ENCODE measurements at regions of chr10 and their contacts with region 1.

Region 1: DNA sequence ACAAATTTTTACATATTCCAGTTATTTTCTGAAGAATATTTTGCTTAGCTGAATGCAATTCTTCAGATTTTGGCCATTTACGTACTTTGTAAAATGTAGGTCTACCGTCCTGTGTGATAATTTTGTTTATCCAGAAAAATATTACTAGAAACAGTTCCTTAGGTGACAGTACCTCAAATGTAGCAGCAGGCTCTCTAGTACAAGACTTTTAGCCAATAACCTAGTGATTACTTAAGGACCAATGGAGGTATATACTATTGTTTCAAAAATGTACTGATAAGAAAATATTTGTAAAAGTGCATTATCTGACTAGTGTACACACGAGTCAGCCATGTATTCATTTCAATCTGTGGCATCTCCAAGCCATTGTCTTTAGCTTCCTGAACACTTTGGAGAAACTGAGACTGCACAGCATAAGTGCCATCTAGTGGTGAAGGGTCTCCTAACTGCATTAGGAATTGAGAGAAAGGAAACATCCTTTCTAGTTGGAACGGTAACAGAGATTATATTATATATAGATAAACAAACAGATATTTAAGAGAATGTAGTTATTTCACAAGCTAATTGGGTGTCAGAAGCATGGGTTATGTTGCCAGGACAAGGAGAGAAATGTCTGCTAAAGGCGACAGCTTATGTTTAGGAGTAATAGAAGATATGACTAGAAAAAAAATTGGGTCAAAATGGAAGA is 23.7 kb downstream of the RTKN2 start:
- DNase-seq: peak; percentile 39
- H3K4me3 Mint-ChIP-seq: no peak overlapping the region
- H3K27ac Mint-ChIP-seq: peak overlapping the region; percentile 63
- H3K4me1 Mint-ChIP-seq: peaks cover 32% of the 10 kb centered on the region
- H3K27me3 Mint-ChIP-seq: no peaks in the 10 kb centered on the region

Region 2: GRCh38 chr10:61628875-61629513 is 615.9 kb before region 1 on chr10:
- intact Hi-C with region 1: no loop called
- DNase-seq: no peak
- H3K4me3 Mint-ChIP-seq: no peak overlapping the region
- H3K27ac Mint-ChIP-seq: no peak overlapping the region
- H3K4me1 Mint-ChIP-seq: no peaks in the 10 kb centered on the region
- H3K27me3 Mint-ChIP-seq: no peaks in the 10 kb centered on the region

Region 3: DNA sequence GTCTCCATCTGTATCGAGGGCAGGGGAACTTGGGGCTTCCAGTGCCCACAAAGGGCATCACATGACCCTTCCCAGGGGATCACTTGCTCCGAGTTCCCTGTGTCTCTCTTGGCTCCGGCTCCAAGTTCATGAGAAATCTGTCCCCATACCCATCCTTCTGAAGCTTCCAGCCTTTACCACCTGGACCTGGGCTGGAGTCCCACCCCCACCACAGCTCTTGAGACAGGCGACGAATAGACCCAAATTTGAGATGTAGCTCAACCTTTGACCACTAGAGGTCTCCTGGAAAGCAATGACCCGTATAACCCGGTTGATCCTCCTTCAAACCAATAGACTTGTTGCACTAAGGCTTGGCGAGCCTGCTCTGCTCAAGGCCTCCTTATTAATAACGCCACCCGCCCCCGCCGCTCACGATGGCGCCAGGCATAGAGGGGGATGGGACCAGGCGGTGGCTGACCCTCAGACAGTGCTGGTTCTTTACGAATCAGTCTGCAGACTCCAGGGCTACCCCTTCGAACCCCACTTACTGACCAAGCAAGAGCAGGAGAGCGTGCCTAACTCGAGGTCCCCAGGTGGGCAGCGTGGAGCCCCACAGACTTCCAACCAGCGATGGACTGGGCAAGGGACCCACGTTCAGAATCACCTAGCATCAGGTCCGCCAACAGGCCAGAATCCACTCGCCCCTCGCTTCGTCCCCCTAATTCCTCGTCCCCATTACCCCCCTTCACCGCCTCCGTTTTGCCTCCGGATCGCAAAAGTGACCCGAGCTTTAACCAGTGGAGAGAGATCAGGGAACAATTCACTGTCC is 347.9 kb before region 1 on chr10:
- intact Hi-C with region 1: loop called (anchors 1 kb)
- DNase-seq: peak; percentile 56
- H3K4me3 Mint-ChIP-seq: peak overlapping the region; percentile 73
- H3K27ac Mint-ChIP-seq: peak overlapping the region; percentile 83
- H3K4me1 Mint-ChIP-seq: peaks cover 42% of the 10 kb centered on the region
- H3K27me3 Mint-ChIP-seq: no peaks in the 10 kb centered on the region

Region 4: DNA sequence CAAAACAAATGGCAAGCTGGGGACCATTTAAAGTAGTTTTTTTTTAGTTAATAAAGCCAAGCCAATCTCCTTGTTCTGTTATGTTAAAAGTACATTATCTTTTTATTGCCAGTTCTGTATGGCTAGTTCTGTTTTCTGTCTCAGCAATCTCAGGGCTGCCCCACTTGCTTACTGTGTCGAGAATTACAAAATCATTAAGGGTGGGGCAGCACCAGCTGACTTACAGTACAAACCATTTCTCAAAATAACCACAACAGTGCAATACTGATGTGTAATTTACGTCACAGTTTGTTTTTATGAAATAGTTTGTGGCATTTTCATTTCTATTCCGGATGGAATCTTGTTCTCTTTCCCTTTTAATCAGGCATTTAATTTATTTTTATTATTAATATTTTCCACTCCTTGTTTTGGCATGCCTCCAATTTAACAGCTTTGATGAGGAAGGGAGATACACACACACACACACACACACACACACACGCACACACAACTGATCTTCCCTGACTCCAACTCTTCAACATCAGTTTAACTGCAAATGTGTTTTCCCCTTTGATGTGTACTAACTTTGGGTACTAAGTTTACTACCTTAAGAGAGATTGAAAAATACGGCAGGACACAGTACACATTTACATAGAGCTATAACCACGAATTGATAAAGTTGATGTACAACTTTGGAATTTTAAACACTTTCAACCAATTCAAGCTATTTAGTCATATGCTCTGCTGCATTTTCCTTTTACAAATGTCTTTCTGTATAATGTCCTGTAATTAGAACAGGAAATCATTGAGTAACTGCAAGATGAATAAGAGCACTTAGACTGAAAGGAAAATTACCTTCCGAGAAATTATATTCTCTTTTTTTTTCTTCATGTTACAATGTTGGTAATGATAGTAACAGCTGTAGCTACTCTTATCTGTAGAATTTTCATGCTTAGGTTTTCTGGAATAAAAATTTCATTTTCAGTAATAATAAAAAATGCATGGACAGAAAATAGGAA is 252.0 kb before region 1 on chr10:
- intact Hi-C with region 1: loop called (anchors 1 kb)
- DNase-seq: peak; percentile 49
- H3K4me3 Mint-ChIP-seq: peak overlapping the region; percentile 73
- H3K27ac Mint-ChIP-seq: peak overlapping the region; percentile 88
- H3K4me1 Mint-ChIP-seq: peaks cover 68% of the 10 kb centered on the region
- H3K27me3 Mint-ChIP-seq: no peaks in the 10 kb centered on the region

Region 5: GRCh38 chr10:62063795-62064472 is 181.0 kb before region 1 on chr10:
- intact Hi-C with region 1: loop called (anchors 1 kb)
- DNase-seq: no peak
- H3K4me3 Mint-ChIP-seq: peak overlapping the region; percentile 39
- H3K27ac Mint-ChIP-seq: peak overlapping the region; percentile 87
- H3K4me1 Mint-ChIP-seq: peaks cover 72% of the 10 kb centered on the region
- H3K27me3 Mint-ChIP-seq: no peaks in the 10 kb centered on the region

Region 6: GRCh38 chr10:62224606-62225005 is 20.3 kb before region 1 on chr10:
- intact Hi-C with region 1: loop called (anchors 1 kb)
- DNase-seq: no peak
- H3K4me3 Mint-ChIP-seq: no peak overlapping the region
- H3K27ac Mint-ChIP-seq: no peak overlapping the region
- H3K4me1 Mint-ChIP-seq: peaks cover 9% of the 10 kb centered on the region
- H3K27me3 Mint-ChIP-seq: no peaks in the 10 kb centered on the region

Measured in activated T-helper 2 cell treated with anti-CD3 and anti-CD28 coated beads, Interferon-gamma antibody, Interleukin-2, Interleukin-4, amounts not matched to agents 10 μg/mL and 5 μg/mL and 100 μg/mL, durations not matched to agents 14 hours and 24 hours and 36 hours (primary cell).